ENCODE measurements at regions of chr4 and their contacts with region 1.

Region 1: DNA sequence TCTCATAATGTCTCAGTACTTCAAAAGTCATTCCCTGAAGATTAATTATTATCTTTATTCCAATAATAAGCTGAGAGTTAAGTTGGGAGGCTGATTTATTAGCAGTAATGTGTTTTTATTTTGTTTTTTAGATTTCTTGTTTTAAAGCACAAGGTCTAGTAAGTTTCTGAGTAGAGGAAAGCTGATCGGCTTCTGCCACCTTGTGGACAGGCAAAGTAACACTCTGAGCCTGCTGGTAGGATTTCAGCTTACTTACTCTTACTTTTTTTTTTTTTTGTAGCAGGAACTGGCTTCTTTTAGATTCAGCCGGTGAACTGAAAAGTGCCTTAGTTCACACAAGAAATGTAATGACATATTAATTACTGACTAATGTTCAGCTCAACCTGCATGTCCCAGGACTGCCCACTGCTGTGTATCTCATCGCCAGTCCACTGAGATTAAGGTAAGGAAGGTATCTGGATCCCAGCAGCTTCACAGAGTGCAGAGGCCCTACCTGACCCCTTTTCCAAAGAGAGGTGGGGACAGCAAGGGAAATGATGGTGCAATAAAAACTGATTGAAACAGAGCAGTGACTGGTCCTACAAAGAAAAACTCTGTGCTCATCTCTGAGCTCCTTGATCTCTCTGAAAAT is 126.5 kb downstream of the ADGRA3 start:
- DNase-seq: peak; percentile 68
- H3K4me3 Mint-ChIP-seq: no peak overlapping the region
- H3K27ac Mint-ChIP-seq: no peak overlapping the region
- H3K4me1 Mint-ChIP-seq: peaks cover 6% of the 10 kb centered on the region
- H3K27me3 Mint-ChIP-seq: no peaks in the 10 kb centered on the region
- CTCF ChIP-seq: peak; percentile 71

Region 2: GRCh38 chr4:21512353-21512752 is 877.0 kb before region 1 on chr4:
- CTCF ChIA-PET with region 1: interaction called, 5 read pairs
- POLR2A ChIA-PET with region 1: no interaction called
- intact Hi-C with region 1: loop called (anchors 10 kb)
- DNase-seq: peak; percentile 55
- H3K4me3 Mint-ChIP-seq: no peak overlapping the region
- H3K27ac Mint-ChIP-seq: no peak overlapping the region
- H3K4me1 Mint-ChIP-seq: peaks cover 5% of the 10 kb centered on the region
- H3K27me3 Mint-ChIP-seq: peaks cover 54% of the 10 kb centered on the region
- CTCF ChIP-seq: peak; percentile 62

Region 3: DNA sequence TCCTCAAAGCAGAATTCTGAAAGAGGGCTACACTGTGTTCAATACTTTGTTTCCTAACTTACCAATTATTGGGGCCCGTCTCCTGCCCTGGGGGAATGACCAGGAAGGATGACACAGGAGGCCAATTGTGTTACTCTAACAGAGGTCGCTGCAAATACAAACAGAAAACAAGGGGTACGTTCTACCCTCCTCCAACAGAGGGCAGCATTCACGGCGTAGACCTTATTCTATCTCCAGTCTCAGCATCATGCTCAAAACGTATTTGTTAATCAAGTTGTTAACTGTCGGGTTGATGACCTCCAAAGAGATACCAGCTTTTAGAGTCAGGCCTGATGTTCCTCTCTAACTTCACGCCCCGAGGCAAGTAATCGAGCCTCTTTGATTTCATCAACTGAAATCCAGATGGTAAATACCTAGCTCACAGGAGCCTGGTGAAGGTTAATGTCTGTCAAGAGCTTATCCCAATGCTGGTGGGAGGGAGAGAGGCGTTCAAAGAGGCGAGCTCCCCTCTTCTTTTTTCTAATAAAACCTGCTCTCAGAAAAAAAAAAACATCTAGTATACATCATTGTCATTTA is 259.8 kb before region 1 on chr4:
- CTCF ChIA-PET with region 1: interaction called, 34 read pairs
- POLR2A ChIA-PET with region 1: no interaction called
- intact Hi-C with region 1: loop called (anchors 1 kb)
- DNase-seq: peak; percentile 66
- H3K4me3 Mint-ChIP-seq: no peak overlapping the region
- H3K27ac Mint-ChIP-seq: no peak overlapping the region
- H3K4me1 Mint-ChIP-seq: no peaks in the 10 kb centered on the region
- H3K27me3 Mint-ChIP-seq: no peaks in the 10 kb centered on the region
- CTCF ChIP-seq: peak; percentile 54

Region 4: DNA sequence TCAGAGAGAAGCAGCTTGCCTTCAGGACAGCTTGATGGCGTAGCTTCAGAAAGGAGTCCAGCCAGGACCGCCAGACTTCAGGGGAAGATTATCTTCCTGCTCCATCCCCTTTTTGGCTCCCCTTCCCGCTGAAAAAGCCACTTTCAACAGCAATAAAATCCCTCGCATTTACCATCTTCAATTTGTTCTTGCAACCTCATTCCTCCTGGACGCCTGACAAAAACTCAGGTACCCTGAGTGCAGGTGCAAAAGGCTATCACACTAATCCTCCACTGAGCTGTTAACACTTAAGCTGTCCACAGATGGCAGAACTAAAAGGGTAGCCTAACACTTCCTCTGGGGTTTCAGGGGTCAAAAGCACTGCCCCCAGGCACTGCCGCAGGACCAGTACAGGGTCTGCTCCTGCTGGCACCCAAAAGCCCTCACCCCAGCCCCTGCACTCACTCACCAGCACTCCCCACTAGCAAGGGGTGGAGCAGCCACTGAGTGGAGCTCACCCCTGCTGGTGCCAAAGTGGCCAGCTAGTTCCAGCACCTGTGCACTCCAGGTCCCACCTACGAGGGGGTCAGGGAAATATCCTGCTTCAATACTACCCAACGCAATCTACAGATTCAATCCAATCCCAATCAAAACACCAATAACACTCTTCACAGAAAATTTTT is 19.3 kb before region 1 on chr4:
- CTCF ChIA-PET with region 1: interaction called, 24 read pairs
- POLR2A ChIA-PET with region 1: no interaction called
- intact Hi-C with region 1: no loop called
- DNase-seq: no peak
- H3K4me3 Mint-ChIP-seq: no peak overlapping the region
- H3K27ac Mint-ChIP-seq: no peak overlapping the region
- H3K4me1 Mint-ChIP-seq: no peaks in the 10 kb centered on the region
- H3K27me3 Mint-ChIP-seq: no peaks in the 10 kb centered on the region
- CTCF ChIP-seq: no peak

Region 5: GRCh38 chr4:22573198-22573597 is 183.8 kb after region 1 on chr4:
- CTCF ChIA-PET with region 1: no interaction called
- POLR2A ChIA-PET with region 1: no interaction called
- intact Hi-C with region 1: no loop called
- DNase-seq: peak; percentile 41
- H3K4me3 Mint-ChIP-seq: no peak overlapping the region
- H3K27ac Mint-ChIP-seq: no peak overlapping the region
- H3K4me1 Mint-ChIP-seq: no peaks in the 10 kb centered on the region
- H3K27me3 Mint-ChIP-seq: no peaks in the 10 kb centered on the region
- CTCF ChIP-seq: no peak

Region 6: GRCh38 chr4:22688236-22688635 is 298.9 kb after region 1 on chr4:
- CTCF ChIA-PET with region 1: interaction called, 12 read pairs
- POLR2A ChIA-PET with region 1: no interaction called
- intact Hi-C with region 1: no loop called
- DNase-seq: no peak
- H3K4me3 Mint-ChIP-seq: no peak overlapping the region
- H3K27ac Mint-ChIP-seq: peak overlapping the region; percentile 39
- H3K4me1 Mint-ChIP-seq: peaks cover 14% of the 10 kb centered on the region
- H3K27me3 Mint-ChIP-seq: no peaks in the 10 kb centered on the region
- CTCF ChIP-seq: no peak

Measured in MCF 10A (cell line).